Vagina (tissue), 2 donors: ENCODE measurements at regions of chr9 and their contacts with region 1.

Region 1: GRCh38 chr9:20884985-20885593 is 146.4 kb downstream of the HACD4 start:
- DNase-seq: no peak
- H3K4me3 ChIP-seq: no peak overlapping the region
- H3K27ac ChIP-seq: no peak overlapping the region
- H3K4me1 ChIP-seq: no peaks in the 10 kb centered on the region
- H3K27me3 ChIP-seq: no peaks in the 10 kb centered on the region
- CTCF ChIP-seq: peak in 2 of 3 experiments; percentile 40 to 48
- POLR2A ChIP-seq: no peak

Region 2: GRCh38 chr9:20570756-20571155 is 314.3 kb before region 1 on chr9:
- intact Hi-C with region 1: no loop called
- DNase-seq: no peak
- H3K4me3 ChIP-seq: no peak overlapping the region
- H3K27ac ChIP-seq: no peak overlapping the region
- H3K4me1 ChIP-seq: peaks cover 19% of the 10 kb centered on the region
- H3K27me3 ChIP-seq: no peaks in the 10 kb centered on the region
- CTCF ChIP-seq: no peak
- POLR2A ChIP-seq: no peak

Region 3: DNA sequence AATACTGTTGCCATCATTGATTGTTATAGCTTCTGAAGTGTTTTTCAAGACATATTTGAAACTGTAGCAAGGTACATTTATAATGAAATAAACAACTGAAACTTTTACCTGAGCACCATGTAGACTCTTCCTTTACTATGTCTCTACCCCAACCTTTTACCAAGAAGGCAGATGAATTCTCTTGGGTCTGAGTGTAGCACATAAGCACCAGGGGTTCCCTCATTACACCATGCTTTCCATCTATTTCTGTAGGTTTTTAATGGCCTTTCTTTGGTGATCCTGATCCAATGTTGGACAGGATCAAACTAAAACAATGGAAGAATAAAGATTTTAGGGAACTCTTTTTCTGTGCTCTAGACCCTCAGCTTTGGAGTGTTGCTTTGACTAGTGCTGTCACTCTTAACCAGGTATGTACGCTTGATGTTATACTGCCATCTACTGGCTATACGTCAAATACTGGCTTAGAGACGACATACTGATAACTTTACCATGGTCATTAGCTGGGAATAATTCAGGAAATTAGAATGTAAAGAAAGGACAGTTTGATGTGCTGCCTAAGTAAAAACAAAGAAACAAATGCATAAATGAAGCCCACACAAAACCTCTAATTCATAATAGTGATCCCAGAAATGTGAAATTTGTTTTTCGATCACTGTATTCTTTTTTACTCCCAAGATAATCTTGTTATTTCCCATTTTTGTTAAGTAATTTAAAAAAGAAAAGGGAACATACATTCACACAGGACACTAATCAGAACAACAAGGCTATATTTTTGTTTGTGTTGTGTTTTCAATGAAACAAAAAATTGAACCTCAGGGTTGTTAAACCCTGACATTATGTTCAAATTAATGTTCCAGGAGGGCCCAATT is 225.9 kb after region 1 on chr9:
- intact Hi-C with region 1: loop called (anchors 10 kb)
- DNase-seq: no peak
- H3K4me3 ChIP-seq: no peak overlapping the region
- H3K27ac ChIP-seq: no peak overlapping the region
- H3K4me1 ChIP-seq: no peaks in the 10 kb centered on the region
- H3K27me3 ChIP-seq: no peaks in the 10 kb centered on the region
- CTCF ChIP-seq: peak; percentile 38 to 78 (median 65)
- POLR2A ChIP-seq: no peak